GM12878 (cell line): ENCODE measurements at regions of chr12 and their contacts with region 1.

Region 1: GRCh38 chr12:71870416-71870815 is 30.9 kb downstream of the TBC1D15 start:
- DNase-seq: peak; percentile 27
- ATAC-seq: peak; percentile 90
- H3K4me3 ChIP-seq: peak overlapping the region; percentile 63; the same call in 1 of the 2 replicates
- H3K27ac ChIP-seq: peak overlapping the region; percentile 45
- H3K4me1 ChIP-seq: peaks cover 13% of the 10 kb centered on the region
- H3K27me3 ChIP-seq: no peaks in the 10 kb centered on the region
- CTCF ChIP-seq: no peak
- EP300 ChIP-seq: peak in 1 of 2 experiments; percentile 28; a peak in 1 of 4 replicates
- POLR2A ChIP-seq: no peak
- RAD21 ChIP-seq: no peak

Region 2: DNA sequence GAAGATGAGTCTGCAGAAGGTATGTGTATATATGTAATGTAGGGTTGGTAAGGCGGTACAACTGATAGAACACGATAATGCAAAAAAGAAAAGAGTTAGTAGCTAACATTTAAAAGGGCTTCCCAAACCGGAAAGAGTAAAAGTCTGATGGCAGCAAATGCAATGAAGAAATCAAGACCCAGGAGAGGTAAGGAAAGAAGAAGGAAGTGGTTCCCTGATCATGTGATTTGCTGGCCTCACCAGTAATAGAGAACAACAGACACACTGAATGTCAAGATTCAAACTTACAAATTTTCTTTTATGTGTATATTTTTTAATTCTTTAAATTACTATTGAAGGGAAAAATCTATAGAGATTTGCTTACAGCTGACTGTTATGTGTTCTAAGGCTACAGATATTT is 225.1 kb before region 1 on chr12:
- CTCF ChIA-PET with region 1: no interaction called
- POLR2A ChIA-PET with region 1: no interaction called
- RAD21 ChIA-PET with region 1: no interaction called
- SMC1A ChIA-PET with region 1: no interaction called
- in situ Hi-C with region 1: no loop called
- intact Hi-C with region 1: no loop called
- DNase-seq: no peak
- ATAC-seq: no peak
- H3K4me3 ChIP-seq: no peak overlapping the region
- H3K27ac ChIP-seq: no peak overlapping the region
- H3K4me1 ChIP-seq: peaks cover 7% of the 10 kb centered on the region
- H3K27me3 ChIP-seq: no peaks in the 10 kb centered on the region
- CTCF ChIP-seq: no peak
- EP300 ChIP-seq: no peak
- POLR2A ChIP-seq: no peak
- RAD21 ChIP-seq: no peak

Region 3: DNA sequence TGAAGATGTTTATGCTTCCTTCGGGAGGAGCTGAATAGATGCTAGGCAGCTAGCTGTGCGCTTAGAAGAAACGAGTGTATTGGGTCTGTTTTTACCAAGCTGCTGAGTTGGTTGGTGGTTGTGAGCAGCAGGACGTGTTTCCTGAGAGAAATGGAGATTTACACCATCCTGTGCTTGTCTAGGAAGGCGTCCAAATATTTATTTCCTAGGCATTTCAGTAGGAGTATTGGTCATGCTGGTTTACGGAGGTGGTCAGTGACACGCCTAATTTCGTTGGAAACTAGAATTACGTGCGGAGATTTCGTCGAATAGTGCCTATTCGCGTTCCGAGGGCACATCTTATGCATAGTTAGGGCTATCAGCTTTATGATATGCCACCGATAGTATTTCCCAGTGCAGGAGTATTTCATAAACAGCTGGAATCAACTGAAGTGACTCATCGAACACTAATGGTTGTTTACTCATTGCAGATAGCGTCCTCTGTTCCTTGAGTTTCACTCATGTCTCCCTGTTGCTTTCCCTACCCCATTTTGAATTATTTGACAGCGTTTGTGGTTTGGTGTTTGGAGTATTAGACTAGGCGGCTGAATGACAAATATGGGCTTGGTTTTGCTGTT is 30.1 kb before region 1 on chr12:
- CTCF ChIA-PET with region 1: interaction called, 3 read pairs
- POLR2A ChIA-PET with region 1: no interaction called
- RAD21 ChIA-PET with region 1: no interaction called
- SMC1A ChIA-PET with region 1: interaction called, 4 read pairs
- in situ Hi-C with region 1: no loop called
- intact Hi-C with region 1: loop called (anchors 2 kb)
- DNase-seq: no peak
- ATAC-seq: peak; percentile 34
- H3K4me3 ChIP-seq: peak overlapping the region; percentile 86
- H3K27ac ChIP-seq: peak overlapping the region; percentile 81
- H3K4me1 ChIP-seq: peaks cover 10% of the 10 kb centered on the region; the same call in 1 of the 2 replicates
- H3K27me3 ChIP-seq: no peaks in the 10 kb centered on the region
- CTCF ChIP-seq: no peak
- EP300 ChIP-seq: no peak
- POLR2A ChIP-seq: no peak
- RAD21 ChIP-seq: no peak

Region 4: GRCh38 chr12:71846322-71846940 is 24.0 kb before region 1 on chr12:
- CTCF ChIA-PET with region 1: interaction called, 10 read pairs
- POLR2A ChIA-PET with region 1: no interaction called
- RAD21 ChIA-PET with region 1: no interaction called
- SMC1A ChIA-PET with region 1: interaction called, 4 read pairs
- in situ Hi-C with region 1: no loop called
- intact Hi-C with region 1: loop called (anchors 2 kb)
- DNase-seq: no peak
- ATAC-seq: peak; percentile 60
- H3K4me3 ChIP-seq: no peak overlapping the region
- H3K27ac ChIP-seq: no peak overlapping the region
- H3K4me1 ChIP-seq: peaks cover 4% of the 10 kb centered on the region; the same call in 1 of the 2 replicates
- H3K27me3 ChIP-seq: no peaks in the 10 kb centered on the region
- CTCF ChIP-seq: peak; percentile 45 to 50 (median 47); a peak in 5 of 6 replicates
- EP300 ChIP-seq: no peak
- POLR2A ChIP-seq: no peak
- RAD21 ChIP-seq: peak; percentile 31; the same call in 1 of the 2 replicates

Region 5: GRCh38 chr12:72219937-72220336 is 349.5 kb after region 1 on chr12:
- CTCF ChIA-PET with region 1: no interaction called
- POLR2A ChIA-PET with region 1: no interaction called
- RAD21 ChIA-PET with region 1: no interaction called
- SMC1A ChIA-PET with region 1: no interaction called
- in situ Hi-C with region 1: no loop called
- intact Hi-C with region 1: no loop called
- DNase-seq: no peak
- ATAC-seq: no peak
- H3K4me3 ChIP-seq: no peak overlapping the region
- H3K27ac ChIP-seq: no peak overlapping the region
- H3K4me1 ChIP-seq: no peaks in the 10 kb centered on the region
- H3K27me3 ChIP-seq: no peaks in the 10 kb centered on the region
- CTCF ChIP-seq: no peak
- EP300 ChIP-seq: no peak
- POLR2A ChIP-seq: no peak
- RAD21 ChIP-seq: no peak